Activated naive CD4-positive, alpha-beta T cell treated with anti-CD3 and anti-CD28 coated beads for 36 hours (primary cell): ENCODE measurements at regions of chr17 and their contacts with region 1.

Region 1: GRCh38 chr17:49556223-49556971 is 19.3 kb upstream of the NXPH3 start:
- DNase-seq: peak; percentile 87
- H3K4me3 Mint-ChIP-seq: no peak overlapping the region
- H3K27ac Mint-ChIP-seq: no peak overlapping the region
- H3K4me1 Mint-ChIP-seq: peaks cover 5% of the 10 kb centered on the region
- H3K27me3 Mint-ChIP-seq: peaks cover 2% of the 10 kb centered on the region

Region 2: DNA sequence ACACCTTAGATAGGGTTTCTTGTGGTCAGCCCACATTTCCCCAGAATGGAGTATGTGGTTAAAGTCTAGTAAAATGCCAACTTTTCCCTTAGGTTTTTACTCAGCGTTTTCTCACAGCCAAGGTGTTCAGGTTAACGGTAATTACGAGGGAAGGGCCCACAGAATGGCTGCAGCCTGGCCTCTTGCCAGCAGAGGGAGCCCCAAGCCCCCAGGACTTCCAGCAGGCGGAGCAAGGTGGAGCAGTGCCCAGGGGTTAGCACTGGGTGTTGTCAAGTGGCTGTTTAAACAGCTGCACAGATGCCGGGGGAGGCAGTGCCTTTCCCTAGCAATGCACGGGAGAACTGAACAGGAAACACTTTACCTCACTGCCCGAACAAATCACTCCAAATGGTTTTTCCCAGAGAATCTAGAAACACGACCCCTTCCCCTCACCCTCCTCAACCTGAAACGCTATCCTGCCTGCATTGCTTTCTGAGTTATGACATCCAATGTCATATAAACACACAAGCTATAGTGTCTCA is 148.4 kb before region 1 on chr17:
- CTCF ChIA-PET with region 1: interaction called, 38 read pairs
- intact Hi-C with region 1: loop called (anchors 1 kb)
- DNase-seq: peak; percentile 91
- H3K4me3 Mint-ChIP-seq: no peak overlapping the region
- H3K27ac Mint-ChIP-seq: no peak overlapping the region
- H3K4me1 Mint-ChIP-seq: peaks cover 29% of the 10 kb centered on the region
- H3K27me3 Mint-ChIP-seq: no peaks in the 10 kb centered on the region

Region 3: DNA sequence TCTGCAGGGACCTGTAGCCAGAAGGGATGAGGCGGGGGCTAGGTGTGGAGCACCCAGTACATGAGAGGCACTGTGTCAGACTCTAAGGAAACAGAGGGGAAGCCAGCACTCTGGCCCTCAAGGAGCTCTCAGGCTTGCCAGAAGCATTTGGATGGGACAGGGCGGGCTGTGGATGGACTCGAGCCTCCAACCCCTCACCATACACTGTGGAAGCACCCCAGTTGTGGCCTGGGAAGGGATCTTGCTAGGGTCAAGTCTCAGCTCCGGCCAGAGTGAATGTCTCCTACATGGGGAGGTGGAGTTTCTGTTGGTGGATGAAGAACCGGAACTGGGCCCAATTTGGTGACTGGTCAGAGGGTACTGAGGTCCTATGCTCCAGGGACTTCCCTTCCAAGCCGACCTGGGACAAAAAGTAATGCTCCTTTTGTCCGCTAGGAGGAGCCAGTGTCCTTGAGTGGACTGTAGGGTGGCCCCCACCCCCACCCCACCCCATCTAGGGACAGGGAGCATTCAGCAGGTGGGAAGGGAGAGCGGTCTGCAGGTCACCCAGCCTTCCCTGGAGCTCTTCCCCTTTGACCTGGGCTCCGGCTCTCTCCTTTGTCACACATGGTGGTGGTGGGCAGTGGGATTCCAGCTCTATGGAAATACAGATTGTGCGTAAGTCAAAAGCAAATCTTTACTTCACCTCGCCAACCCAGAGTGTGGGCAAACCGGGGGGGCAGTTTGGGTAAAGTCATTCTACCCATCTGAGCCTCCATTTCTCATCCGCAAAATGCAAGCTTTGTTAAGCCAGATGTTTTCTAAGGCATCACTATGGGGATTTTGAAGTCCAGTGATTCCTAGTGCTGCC is 121.4 kb before region 1 on chr17:
- CTCF ChIA-PET with region 1: interaction called, 103 read pairs
- intact Hi-C with region 1: loop called (anchors 1 kb)
- DNase-seq: peak; percentile 58
- H3K4me3 Mint-ChIP-seq: no peak overlapping the region
- H3K27ac Mint-ChIP-seq: no peak overlapping the region
- H3K4me1 Mint-ChIP-seq: no peaks in the 10 kb centered on the region
- H3K27me3 Mint-ChIP-seq: peaks cover 14% of the 10 kb centered on the region

Region 4: DNA sequence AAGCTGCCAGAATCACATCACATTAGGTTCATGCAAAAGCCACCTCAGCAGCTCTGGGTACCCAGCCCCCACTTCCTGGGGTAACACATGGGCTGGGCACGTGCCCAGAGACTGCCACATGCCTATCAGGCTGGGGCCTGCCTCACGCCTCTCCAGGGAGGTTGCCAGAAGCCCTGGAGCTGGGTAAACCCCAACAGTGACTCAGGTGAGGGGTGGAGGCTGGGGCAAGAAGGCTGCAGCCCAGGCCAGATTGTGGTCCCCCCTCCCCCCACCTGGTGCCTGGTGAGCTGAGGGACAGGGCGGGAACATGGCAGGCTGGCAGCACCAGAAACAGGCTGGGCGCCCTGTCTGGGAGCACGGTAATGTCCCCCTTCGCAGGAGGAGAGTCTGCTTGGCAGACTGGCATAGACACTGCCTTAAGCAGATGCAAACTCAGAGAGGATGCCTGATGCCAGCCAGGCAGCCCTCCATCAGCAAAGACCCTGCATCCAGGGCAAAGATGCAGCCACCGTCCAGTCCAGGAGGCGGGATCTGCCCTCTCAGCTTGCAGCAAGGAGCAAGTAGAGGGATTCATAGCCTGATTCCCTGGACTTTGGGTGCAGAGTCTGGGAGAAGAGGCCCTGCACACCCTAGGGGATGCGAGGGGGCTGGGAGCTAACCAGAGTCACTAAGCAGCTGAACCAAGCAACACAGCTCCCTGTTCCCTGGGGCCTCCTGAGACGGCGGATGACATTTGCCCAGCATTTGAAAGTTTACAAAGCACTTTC is 32.5 kb before region 1 on chr17:
- CTCF ChIA-PET with region 1: interaction called, 20 read pairs
- intact Hi-C with region 1: loop called (anchors 2 kb)
- DNase-seq: peak; percentile 88
- H3K4me3 Mint-ChIP-seq: no peak overlapping the region
- H3K27ac Mint-ChIP-seq: no peak overlapping the region
- H3K4me1 Mint-ChIP-seq: peaks cover 10% of the 10 kb centered on the region
- H3K27me3 Mint-ChIP-seq: no peaks in the 10 kb centered on the region

Region 5: DNA sequence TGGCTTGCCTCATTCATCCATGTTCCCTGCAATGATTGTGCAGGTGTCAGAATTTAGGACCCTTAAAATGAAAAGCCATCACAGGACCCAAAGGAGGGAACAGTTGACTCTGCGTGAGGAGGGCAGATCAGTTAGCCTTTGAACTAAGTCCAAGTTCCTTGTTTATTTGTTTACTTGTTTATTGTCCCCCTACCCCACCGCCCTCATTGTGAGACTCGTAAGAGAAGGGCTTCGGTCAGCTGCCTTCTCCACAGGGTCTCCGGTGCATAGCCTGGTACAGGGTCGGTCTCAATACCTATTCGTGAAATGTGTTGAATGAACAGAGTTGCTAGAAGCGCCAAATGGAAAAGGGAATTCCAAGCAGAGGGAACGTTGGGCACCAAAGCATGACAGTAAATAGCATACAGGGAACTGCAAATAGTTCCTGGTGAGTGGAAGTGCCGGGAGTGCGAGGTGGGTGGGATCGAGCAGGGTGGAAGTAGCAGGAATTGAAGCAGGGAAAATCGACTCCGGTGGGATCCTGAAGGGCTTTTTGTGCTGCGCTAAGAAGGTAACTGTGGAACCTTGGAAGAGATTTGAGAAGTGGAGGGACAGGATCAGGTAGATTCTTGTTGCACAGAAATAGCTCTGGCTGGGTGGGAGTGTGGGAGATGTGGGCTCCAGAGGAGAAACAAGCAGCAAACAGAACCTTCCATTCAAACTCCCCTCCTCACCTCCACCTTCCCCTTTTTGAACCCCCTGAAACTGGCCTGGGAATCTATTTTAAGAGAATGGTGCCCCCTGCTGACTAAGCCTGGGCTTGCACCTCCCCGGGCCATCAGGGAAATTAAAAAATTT is 138.7 kb after region 1 on chr17:
- CTCF ChIA-PET with region 1: interaction called, 31 read pairs
- intact Hi-C with region 1: no loop called
- DNase-seq: peak; percentile 87
- H3K4me3 Mint-ChIP-seq: no peak overlapping the region
- H3K27ac Mint-ChIP-seq: peak overlapping the region; percentile 92
- H3K4me1 Mint-ChIP-seq: peaks cover 39% of the 10 kb centered on the region
- H3K27me3 Mint-ChIP-seq: no peaks in the 10 kb centered on the region

Region 6: GRCh38 chr17:49851387-49852291 is 295.2 kb after region 1 on chr17:
- CTCF ChIA-PET with region 1: interaction called, 3 read pairs
- intact Hi-C with region 1: loop called (anchors 1 kb)
- DNase-seq: peak; percentile 76
- H3K4me3 Mint-ChIP-seq: peak overlapping the region; percentile 78
- H3K27ac Mint-ChIP-seq: peak overlapping the region; percentile 64
- H3K4me1 Mint-ChIP-seq: peaks cover 12% of the 10 kb centered on the region
- H3K27me3 Mint-ChIP-seq: peaks cover 2% of the 10 kb centered on the region